Natural killer cell (primary cell): ENCODE measurements at regions of chr16 and their contacts with region 1.

Region 1: GRCh38 chr16:17343028-17343427 is 127.7 kb downstream of the XYLT1 start:
- DNase-seq: peak; percentile 66 to 81
- ATAC-seq: peak; percentile 50 to 77 (median 71)
- H3K4me3 ChIP-seq: no peak overlapping the region
- H3K4me3 Mint-ChIP-seq: peak overlapping the region; percentile 93
- H3K27ac ChIP-seq: peak overlapping the region; percentile 64
- H3K27ac Mint-ChIP-seq: peak overlapping the region; percentile 94 to 96
- H3K4me1 ChIP-seq: peaks cover 74% of the 10 kb centered on the region
- H3K4me1 Mint-ChIP-seq: peaks cover 77 to 81% of the 10 kb centered on the region in 2 donors
- H3K27me3 ChIP-seq: no peaks in the 10 kb centered on the region
- H3K27me3 Mint-ChIP-seq: no peaks in the 10 kb centered on the region
- CTCF ChIP-seq: no peak

Region 2: DNA sequence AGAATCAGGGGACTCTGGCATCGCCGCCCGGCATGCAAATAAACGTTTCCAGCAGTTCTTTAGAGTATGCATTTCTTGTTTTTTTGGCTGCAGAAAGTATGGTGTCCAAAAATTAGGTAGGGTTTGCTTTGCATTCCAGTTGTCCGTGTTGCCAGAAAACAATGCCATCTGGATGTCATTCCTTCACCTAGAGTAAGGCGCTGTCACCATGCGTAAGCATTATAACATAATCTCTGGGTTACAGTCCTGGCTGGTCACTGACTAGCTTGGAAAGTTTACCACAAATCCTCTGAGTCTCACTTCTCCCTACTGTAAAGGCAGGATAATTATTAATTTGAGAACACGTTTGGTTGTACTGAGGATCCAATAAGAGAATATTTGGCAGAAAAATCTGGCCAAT is 330.0 kb before region 1 on chr16:
- intact Hi-C with region 1: loop called (anchors 1 kb)
- DNase-seq: no peak
- ATAC-seq: no peak
- H3K4me3 ChIP-seq: no peak overlapping the region
- H3K4me3 Mint-ChIP-seq: peak overlapping the region; percentile 82
- H3K27ac ChIP-seq: peak overlapping the region; percentile 87
- H3K27ac Mint-ChIP-seq: peak overlapping the region; percentile 92 to 96
- H3K4me1 ChIP-seq: peaks cover 17% of the 10 kb centered on the region
- H3K4me1 Mint-ChIP-seq: peaks cover 11 to 16% of the 10 kb centered on the region in 2 donors
- H3K27me3 ChIP-seq: no peaks in the 10 kb centered on the region
- H3K27me3 Mint-ChIP-seq: no peaks in the 10 kb centered on the region
- CTCF ChIP-seq: no peak

Region 3: DNA sequence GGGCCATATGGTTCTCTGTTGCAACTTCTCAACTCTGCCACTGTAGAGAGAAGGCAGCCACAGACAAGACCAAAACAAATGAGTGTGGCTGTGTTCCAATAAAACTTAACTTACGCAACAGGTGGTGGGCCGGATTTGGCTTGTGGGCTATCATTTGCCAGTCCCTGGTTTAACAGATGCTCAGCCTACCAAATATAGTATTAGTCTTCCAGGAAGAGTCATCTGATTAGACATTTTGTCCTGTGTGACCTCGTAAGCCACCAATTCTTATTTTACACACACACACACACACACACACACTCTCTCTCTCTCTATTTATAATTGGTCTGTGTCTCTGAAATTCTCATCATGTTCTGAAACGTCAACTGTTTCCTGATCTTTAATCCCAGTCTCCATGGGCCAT is 118.1 kb before region 1 on chr16:
- intact Hi-C with region 1: loop called (anchors 2 kb)
- DNase-seq: peak; percentile 63 to 66
- ATAC-seq: peak; percentile 83 to 92 (median 83)
- H3K4me3 ChIP-seq: no peak overlapping the region
- H3K4me3 Mint-ChIP-seq: peak overlapping the region; percentile 82
- H3K27ac ChIP-seq: peak overlapping the region; percentile 28
- H3K27ac Mint-ChIP-seq: peak overlapping the region; percentile 79 to 84
- H3K4me1 ChIP-seq: peaks cover 30% of the 10 kb centered on the region
- H3K4me1 Mint-ChIP-seq: peaks cover 38 to 50% of the 10 kb centered on the region in 2 donors
- H3K27me3 ChIP-seq: no peaks in the 10 kb centered on the region
- H3K27me3 Mint-ChIP-seq: no peaks in the 10 kb centered on the region
- CTCF ChIP-seq: no peak

Region 4: GRCh38 chr16:17328932-17329331 is 14.1 kb before region 1 on chr16:
- intact Hi-C with region 1: no loop called
- DNase-seq: no peak
- ATAC-seq: no peak
- H3K4me3 ChIP-seq: no peak overlapping the region
- H3K4me3 Mint-ChIP-seq: no peak overlapping the region
- H3K27ac ChIP-seq: no peak overlapping the region
- H3K27ac Mint-ChIP-seq: no peak overlapping the region
- H3K4me1 ChIP-seq: no peaks in the 10 kb centered on the region
- H3K4me1 Mint-ChIP-seq: peaks cover 45 to 54% of the 10 kb centered on the region in 2 donors
- H3K27me3 ChIP-seq: no peaks in the 10 kb centered on the region
- H3K27me3 Mint-ChIP-seq: no peaks in the 10 kb centered on the region
- CTCF ChIP-seq: no peak

Region 5: GRCh38 chr16:17369421-17370222 is 26.6 kb after region 1 on chr16:
- intact Hi-C with region 1: loop called (anchors 1 kb)
- DNase-seq: peak; percentile 68 to 92
- ATAC-seq: peak; percentile 80 to 92 (median 88)
- H3K4me3 ChIP-seq: peak overlapping the region; percentile 8
- H3K4me3 Mint-ChIP-seq: peak overlapping the region; percentile 94
- H3K27ac ChIP-seq: peak overlapping the region; percentile 92
- H3K27ac Mint-ChIP-seq: peak overlapping the region; percentile 96 to 99
- H3K4me1 ChIP-seq: peaks cover 75% of the 10 kb centered on the region
- H3K4me1 Mint-ChIP-seq: peaks cover 89 to 96% of the 10 kb centered on the region in 2 donors
- H3K27me3 ChIP-seq: no peaks in the 10 kb centered on the region
- H3K27me3 Mint-ChIP-seq: no peaks in the 10 kb centered on the region
- CTCF ChIP-seq: no peak

Region 6: DNA sequence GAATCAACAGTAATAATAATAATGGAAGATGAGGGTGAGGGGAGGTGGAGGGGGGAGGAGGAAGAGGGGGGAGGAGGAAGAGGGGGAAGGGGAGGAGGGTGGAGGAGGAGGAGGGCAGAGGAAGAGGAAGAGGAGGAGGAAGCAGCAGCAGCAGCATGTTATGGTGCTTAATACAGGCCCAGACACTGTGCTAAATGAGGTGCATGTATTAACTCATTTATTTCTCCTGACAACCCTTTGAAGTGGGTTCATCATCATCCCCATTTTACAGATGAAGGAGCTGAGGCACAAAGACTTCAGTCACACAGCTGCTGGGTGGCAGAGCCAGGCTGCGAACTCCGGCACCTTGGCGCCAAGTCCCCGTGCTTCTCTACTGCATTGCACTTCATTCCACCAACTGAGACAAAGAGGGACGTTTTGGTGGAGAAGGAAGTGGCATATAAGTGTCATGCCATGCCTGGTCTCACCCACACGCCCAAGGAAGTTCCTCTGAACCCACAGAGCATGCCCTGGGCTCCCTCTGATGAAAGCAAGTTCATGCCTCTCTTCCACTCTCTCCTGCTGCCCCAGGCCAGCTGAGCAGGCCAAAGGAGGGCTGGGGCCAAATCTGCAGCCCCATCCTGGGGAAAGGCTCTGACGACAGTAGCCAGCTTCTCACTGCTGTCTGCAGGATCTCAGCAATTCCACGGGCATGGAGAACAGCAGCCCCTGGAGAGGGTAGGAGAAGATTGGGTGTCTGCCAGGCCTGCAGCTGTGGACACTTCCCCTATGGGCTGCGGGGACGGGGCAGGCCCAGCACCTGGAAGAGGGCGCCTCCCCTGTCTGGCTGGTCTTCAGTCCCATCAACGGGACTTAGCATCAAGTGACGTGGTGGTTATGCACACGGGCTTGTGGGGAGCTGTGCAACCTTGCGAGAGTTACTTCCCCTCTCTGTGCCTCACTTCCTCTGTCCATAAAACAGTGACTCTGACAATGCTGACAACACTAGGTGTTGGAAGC is 105.9 kb after region 1 on chr16:
- intact Hi-C with region 1: loop called (anchors 5 kb)
- DNase-seq: peak; percentile 34 to 78
- ATAC-seq: peak; percentile 78 to 87 (median 82)
- H3K4me3 ChIP-seq: no peak overlapping the region
- H3K4me3 Mint-ChIP-seq: peak overlapping the region; percentile 82
- H3K27ac ChIP-seq: peak overlapping the region; percentile 61
- H3K27ac Mint-ChIP-seq: peak overlapping the region; percentile 90 to 91
- H3K4me1 ChIP-seq: peaks cover 58% of the 10 kb centered on the region
- H3K4me1 Mint-ChIP-seq: peaks cover 65 to 80% of the 10 kb centered on the region in 2 donors
- H3K27me3 ChIP-seq: no peaks in the 10 kb centered on the region
- H3K27me3 Mint-ChIP-seq: no peaks in the 10 kb centered on the region
- CTCF ChIP-seq: no peak